ENCODE measurements at regions of chr16 and their contacts with region 1.

Region 1: DNA sequence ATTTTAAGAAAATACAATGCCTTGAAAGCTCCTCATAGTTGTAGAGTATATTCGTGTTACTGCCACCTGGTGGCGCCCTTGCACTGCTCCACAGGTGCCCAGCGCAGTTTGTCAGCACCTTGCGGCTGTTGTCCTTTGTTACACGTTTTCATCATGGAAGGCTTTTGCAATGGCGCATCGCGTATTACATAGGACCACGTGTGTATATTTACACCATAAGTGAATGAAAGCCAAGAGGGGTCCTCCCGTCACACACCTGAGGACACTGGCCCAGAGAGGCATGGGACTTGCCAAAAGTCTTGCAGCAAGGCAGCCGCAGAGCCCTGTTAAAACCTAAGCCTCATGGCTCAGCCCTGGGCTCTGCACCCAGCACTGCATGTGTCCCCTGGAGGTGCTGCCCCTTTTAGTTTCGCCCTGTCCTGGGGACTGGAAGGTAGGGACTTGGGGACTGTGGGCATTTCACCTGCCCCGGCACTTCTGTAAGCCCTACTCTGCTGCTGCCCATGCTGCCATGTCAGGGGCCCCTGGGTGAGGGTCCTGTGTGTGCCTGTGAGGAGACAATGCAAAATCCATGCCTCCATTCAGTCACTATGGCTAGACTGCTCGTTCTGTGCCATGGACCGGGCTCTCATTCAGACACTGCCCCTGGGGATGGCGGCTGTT is 24.3 kb downstream of the POLR3E start:
- DNase-seq: peak; percentile 66 to 91
- H3K4me3 ChIP-seq: no peak overlapping the region
- CTCF ChIP-seq: peak in 1 of 3 donors; percentile 49
- POLR2A ChIP-seq: no peak

Region 2: GRCh38 chr16:22374311-22375116 is 53.0 kb after region 1 on chr16 and contains the start of gene CDR2:
- intact Hi-C with region 1: loop called (anchors 10 kb)
- DNase-seq: peak; percentile 97 to 100
- H3K4me3 ChIP-seq: peak within 1 kb of the TSS; percentile 85
- CTCF ChIP-seq: no peak
- POLR2A ChIP-seq: no peak
- total RNA-seq, gene CDR2: 8.5 to 30.3 (median 16.2) TPM

Measured in lower leg skin (tissue), 4 donors.